ENCODE measurements at regions of chr5 and their contacts with region 1.

Region 1: DNA sequence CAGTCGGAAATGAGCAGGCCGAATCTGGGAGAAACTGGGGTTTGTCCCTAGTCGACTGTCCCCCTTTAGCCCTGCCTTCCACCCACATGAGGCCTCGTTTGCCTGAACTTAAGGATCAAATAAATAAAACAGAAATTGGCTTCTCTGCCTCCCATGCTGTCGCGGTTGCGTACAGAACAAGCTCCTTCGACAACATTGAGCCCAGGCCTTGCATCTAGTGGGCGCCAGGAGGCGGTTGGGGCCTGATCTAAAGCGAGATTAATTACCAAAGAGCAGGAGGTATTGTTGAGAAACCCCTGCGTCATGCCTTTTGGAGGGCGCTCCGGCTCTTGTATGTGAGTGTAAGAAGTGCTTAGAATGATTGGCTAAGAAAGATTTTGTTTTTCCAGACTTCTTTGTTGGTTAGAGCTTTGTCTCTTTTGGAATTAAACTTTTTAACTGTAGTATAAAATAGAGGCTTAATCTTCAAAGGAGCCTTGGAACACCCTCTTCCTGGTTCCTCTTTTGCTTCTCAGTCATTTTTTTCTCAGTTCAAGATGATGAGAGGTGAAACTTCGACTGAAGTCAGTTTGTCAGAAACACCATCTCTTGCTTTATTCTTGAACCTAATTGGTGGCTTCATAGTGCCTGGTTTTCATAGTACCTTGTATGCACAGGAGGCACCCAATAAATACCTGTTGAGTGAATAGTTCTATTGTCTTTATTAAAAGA is 827 bp downstream of the ATP6V0E1 start:
- DNase-seq: peak; percentile 80
- ATAC-seq: peak; percentile 84
- H3K4me3 ChIP-seq: peak overlapping the region; percentile 72 to 96 (median 96)
- H3K27ac ChIP-seq: peak overlapping the region; percentile 72
- H3K4me1 ChIP-seq: peaks cover 26% of the 10 kb centered on the region
- H3K27me3 ChIP-seq: no peaks in the 10 kb centered on the region
- CTCF ChIP-seq: peak; percentile 63
- EP300 ChIP-seq: no peak
- POLR2A ChIP-seq: no peak
- RAD21 ChIP-seq: peak; percentile 31

Region 2: DNA sequence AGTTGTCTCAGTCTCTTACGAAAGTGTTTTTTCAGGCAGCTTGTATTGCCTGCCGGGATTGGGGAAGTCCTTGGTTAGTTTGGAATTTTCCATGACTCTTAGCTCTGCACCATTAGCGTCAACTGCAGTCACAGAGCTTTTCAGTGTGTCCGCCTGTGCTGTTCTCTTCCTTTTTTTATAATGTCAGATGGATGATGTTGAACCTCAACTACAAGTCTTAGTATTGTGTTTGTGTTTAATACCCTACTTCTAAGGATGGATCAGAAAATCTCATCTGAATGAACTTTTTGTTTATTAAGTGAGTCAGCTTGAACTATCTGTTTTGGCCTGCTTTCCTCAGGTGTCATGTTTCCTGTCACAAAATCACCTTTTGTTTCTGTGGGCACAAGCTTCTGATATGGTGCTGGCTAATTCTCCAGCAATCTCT is 32.2 kb after region 1 on chr5:
- CTCF ChIA-PET with region 1: no interaction called
- POLR2A ChIA-PET with region 1: interaction called, 6 read pairs
- in situ Hi-C with region 1: no loop called
- intact Hi-C with region 1: loop called (anchors 5 kb)
- DNase-seq: peak; percentile 84
- ATAC-seq: peak; percentile 82
- H3K4me3 ChIP-seq: peak overlapping the region in 2 of 3 experiments; percentile 14 to 38; a peak in 2 of 6 replicates
- H3K27ac ChIP-seq: peak overlapping the region; percentile 71
- H3K4me1 ChIP-seq: peaks cover 57% of the 10 kb centered on the region
- H3K27me3 ChIP-seq: no peaks in the 10 kb centered on the region
- CTCF ChIP-seq: no peak
- EP300 ChIP-seq: peak in 1 of 2 experiments; percentile 43; a peak in 1 of 4 replicates
- POLR2A ChIP-seq: no peak
- RAD21 ChIP-seq: no peak

Region 3: GRCh38 chr5:173144200-173145176 is 160.1 kb after region 1 on chr5 and contains the start of gene BNIP1:
- CTCF ChIA-PET with region 1: interaction called, 9 read pairs
- POLR2A ChIA-PET with region 1: interaction called, 4 read pairs
- in situ Hi-C with region 1: loop called (anchors 5 kb)
- intact Hi-C with region 1: loop called (anchors 1 kb)
- DNase-seq: peak; percentile 90
- ATAC-seq: peak; percentile 93
- H3K4me3 ChIP-seq: peak within 1 kb of the TSS; percentile 77 to 90 (median 85)
- H3K27ac ChIP-seq: peak within 1 kb of the TSS; percentile 70
- H3K4me1 ChIP-seq: peaks cover 19% of the 10 kb centered on the region
- H3K27me3 ChIP-seq: no peaks in the 10 kb centered on the region; a peak in 1 of 5 replicates
- CTCF ChIP-seq: peak; percentile 97
- EP300 ChIP-seq: peak; percentile 32 to 70; a peak in 2 of 4 replicates
- POLR2A ChIP-seq: peak; percentile 67 to 84
- RAD21 ChIP-seq: peak; percentile 54
- total RNA-seq, gene BNIP1: 16.9 and 20.6 TPM in 2 replicates

Region 4: DNA sequence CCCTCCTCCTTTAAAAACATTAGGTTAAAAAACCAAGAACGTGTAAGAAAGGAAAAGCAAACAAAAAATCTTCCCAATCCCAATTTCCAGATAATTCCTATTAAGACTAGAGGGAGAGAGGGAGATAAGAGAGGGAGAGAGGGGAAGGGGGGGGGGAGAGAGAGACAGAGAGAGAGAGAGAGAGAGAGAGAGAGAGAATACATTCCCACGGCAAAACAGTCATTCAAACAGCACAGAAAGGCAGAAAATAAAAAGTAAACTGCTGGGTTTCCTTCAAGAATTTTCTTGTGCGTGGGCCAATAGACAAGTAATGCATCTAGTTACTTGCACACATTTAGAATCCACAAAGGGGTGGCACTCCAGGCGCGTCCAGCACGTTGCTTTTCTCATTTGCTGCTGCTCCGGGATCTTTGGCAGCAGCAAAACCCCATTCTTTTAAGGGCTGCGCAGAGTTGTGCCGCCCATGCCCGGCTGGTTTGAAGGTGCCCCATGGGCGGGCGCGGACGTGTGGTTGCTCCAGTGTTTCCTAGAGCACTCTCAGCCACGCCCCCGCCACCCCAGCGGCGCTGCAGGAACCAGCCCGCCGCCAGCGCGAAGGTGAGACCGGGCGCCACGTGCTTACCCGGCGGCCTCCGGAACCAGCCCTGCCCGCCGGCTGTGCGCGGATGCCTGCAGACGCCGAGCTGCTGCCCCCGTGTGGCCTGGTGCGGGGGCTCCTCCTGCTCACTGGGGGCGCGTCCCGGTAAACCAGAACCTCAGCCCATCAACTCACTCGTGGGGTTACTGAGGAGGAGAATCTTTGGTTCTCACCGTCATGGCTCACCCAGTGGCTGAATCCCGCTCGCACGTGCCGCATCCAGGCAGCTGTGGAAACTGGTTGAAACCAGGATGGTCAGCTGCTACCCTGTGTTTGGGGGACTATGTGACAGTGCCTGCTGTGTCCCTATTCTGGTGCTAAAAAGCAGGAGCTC is 299.2 kb after region 1 on chr5:
- CTCF ChIA-PET with region 1: no interaction called
- POLR2A ChIA-PET with region 1: no interaction called
- in situ Hi-C with region 1: loop called (anchors 25 kb)
- intact Hi-C with region 1: loop called (anchors 1 kb)
- DNase-seq: peak; percentile 68
- ATAC-seq: peak; percentile 98
- H3K4me3 ChIP-seq: peak overlapping the region in 1 of 3 experiments; percentile 45; a peak in 2 of 6 replicates
- H3K27ac ChIP-seq: no peak overlapping the region
- H3K4me1 ChIP-seq: peaks cover 16% of the 10 kb centered on the region
- H3K27me3 ChIP-seq: peaks cover 0 to 17% of the 10 kb centered on the region in 2 experiments; a peak in 2 of 5 replicates
- CTCF ChIP-seq: peak; percentile 93
- EP300 ChIP-seq: peak in 1 of 2 experiments; percentile 25; a peak in 1 of 4 replicates
- POLR2A ChIP-seq: no peak
- RAD21 ChIP-seq: peak; percentile 92

Region 5: DNA sequence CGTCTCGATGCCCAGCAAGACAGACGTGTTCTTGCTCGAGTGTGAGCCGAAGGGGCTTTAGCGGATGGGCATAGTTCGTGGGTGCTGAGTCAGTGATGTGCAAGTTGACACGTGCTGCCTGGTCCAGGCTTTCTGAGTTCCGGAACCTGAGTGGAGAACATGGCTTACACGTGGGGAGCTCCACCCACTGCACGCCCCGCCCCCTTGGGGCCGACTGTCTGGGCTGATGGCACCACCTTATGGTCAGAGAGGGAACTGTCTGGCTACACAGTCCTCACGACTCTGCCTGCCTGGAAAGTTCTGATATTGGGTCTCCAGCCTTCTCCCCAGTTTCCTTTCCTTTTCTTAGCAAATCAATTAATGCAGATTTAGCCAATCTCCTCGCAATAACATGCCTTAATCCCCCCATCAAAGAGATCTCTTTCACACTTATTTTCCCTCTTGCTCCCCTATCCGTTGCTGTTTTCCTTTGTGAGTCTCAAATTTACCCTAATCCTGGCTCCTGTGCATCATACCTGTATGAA is 347.6 kb after region 1 on chr5:
- CTCF ChIA-PET with region 1: no interaction called
- POLR2A ChIA-PET with region 1: interaction called, 19 read pairs
- in situ Hi-C with region 1: no loop called
- intact Hi-C with region 1: no loop called
- DNase-seq: peak; percentile 74
- ATAC-seq: peak; percentile 20
- H3K4me3 ChIP-seq: no peak overlapping the region
- H3K27ac ChIP-seq: no peak overlapping the region
- H3K4me1 ChIP-seq: peaks cover 27% of the 10 kb centered on the region
- H3K27me3 ChIP-seq: no peaks in the 10 kb centered on the region; a peak in 1 of 5 replicates
- CTCF ChIP-seq: peak; percentile 99
- EP300 ChIP-seq: no peak
- POLR2A ChIP-seq: no peak
- RAD21 ChIP-seq: peak; percentile 98